ENCODE measurements at regions of chr6 and their contacts with region 1.

Region 1: GRCh38 chr6:139881728-139882211 is 507.3 kb upstream of the CITED2 start:
- DNase-seq: peak; percentile 66
- H3K4me3 ChIP-seq: no peak overlapping the region
- H3K27ac ChIP-seq: no peak overlapping the region
- H3K4me1 ChIP-seq: peaks cover 4% of the 10 kb centered on the region
- H3K27me3 ChIP-seq: no peaks in the 10 kb centered on the region
- CTCF ChIP-seq: peak; percentile 65

Region 2: GRCh38 chr6:139640448-139640847 is 241.3 kb before region 1 on chr6:
- intact Hi-C with region 1: no loop called
- DNase-seq: no peak
- H3K4me3 ChIP-seq: no peak overlapping the region
- H3K27ac ChIP-seq: no peak overlapping the region
- H3K4me1 ChIP-seq: no peaks in the 10 kb centered on the region
- H3K27me3 ChIP-seq: no peaks in the 10 kb centered on the region
- CTCF ChIP-seq: no peak

Region 3: DNA sequence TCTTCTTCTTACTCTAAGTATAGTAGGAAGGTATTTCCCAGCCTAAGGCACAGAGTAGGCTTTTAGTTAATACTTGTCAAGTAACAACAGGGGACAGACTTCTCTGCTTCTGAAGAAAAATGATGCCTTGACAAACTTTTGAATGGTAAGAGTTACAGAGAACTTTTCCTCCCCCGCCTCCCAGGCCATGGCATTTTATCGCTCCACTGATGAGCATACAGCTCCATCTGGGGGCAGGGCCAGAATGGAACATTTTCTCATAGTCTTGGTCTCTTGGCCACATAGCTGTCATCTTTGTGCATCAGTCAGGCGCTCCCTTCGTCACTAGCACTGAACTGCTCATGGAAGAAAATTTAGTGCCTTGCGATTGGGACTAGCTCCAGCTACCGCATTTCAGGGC is 559.5 kb after region 1 on chr6:
- intact Hi-C with region 1: loop called (anchors 10 kb)
- DNase-seq: peak; percentile 36
- H3K4me3 ChIP-seq: no peak overlapping the region
- H3K27ac ChIP-seq: no peak overlapping the region
- H3K4me1 ChIP-seq: no peaks in the 10 kb centered on the region
- H3K27me3 ChIP-seq: no peaks in the 10 kb centered on the region
- CTCF ChIP-seq: peak; percentile 25